AG04449 (cell line): ENCODE measurements at regions of chr5 and their contacts with region 1.

Region 1: DNA sequence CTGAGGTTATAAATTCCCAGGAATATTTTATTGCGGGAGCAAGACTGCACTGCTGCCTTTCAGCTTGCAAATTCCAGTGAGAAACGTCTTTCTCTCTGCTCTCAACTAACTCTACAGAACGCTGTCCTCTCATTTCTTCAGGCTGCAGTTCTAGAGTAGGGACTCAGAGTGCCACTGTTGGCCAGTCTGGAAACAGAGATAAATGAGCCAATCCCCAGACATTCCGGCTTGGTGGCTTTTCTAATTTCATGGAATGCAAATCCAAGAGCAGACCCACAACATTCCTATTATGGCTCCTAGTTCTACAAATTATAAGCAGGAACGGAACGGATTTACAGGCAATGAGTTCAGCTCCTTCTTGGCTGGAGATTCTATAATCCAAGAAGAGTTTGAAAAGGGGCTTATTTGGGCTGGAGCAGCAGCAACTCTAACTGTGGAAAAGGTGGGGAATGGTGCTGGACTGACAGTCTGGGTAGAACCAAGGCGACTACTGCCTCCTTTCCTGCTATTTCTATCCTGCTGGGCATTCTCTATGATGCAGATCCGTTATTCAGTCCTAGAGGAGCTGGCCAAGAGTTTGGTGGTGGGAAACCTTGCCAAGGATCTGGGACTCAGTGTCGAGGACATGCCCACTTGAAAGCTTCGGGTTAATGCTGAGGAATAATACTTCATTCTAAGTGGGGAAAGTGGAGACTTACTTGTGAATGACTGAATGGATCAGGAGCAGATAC is 9.3 kb downstream of the PCDHGA12 start:
- DNase-seq: no peak
- H3K4me3 ChIP-seq: no peak overlapping the region
- CTCF ChIP-seq: no peak

Region 2: DNA sequence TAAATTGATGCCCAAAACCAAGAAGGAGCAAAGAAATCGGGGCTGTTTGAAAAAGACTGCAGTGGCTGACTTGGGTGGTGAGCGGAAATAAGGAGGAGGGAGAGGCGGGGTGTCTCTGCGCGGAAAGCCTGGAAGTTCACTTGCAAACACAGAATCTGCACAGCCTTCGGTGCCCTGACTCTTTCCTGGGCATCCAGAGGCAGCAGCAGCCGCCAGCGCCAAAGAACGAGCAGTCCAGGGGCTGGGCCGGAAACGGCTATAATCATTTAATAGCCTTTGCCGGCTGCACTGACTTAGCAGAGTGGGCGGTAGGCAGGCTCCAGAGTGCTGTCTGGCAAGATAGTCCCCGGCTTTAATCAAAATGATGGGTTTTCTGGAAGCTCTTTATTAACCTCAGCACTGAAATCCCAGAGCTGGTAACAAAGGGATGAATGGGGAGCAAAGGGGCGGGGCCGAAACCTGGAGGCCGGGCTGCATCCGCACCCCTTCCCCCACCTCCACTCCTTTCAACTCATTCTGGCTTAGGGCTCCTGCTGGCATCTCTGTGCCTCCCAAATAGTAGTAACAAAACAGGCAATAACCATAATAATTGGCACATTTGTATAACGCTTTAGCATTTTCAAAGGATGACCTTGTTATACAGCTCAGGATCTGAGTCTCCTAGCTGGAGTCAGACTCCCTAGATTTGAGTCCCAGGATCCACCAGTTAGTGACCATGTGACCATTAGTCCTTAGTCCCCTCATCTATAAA is 437.5 kb before region 1 on chr5:
- CTCF ChIA-PET with region 1: no interaction called
- POLR2A ChIA-PET with region 1: no interaction called
- DNase-seq: no peak
- H3K4me3 ChIP-seq: no peak overlapping the region
- CTCF ChIP-seq: no peak

Region 3: DNA sequence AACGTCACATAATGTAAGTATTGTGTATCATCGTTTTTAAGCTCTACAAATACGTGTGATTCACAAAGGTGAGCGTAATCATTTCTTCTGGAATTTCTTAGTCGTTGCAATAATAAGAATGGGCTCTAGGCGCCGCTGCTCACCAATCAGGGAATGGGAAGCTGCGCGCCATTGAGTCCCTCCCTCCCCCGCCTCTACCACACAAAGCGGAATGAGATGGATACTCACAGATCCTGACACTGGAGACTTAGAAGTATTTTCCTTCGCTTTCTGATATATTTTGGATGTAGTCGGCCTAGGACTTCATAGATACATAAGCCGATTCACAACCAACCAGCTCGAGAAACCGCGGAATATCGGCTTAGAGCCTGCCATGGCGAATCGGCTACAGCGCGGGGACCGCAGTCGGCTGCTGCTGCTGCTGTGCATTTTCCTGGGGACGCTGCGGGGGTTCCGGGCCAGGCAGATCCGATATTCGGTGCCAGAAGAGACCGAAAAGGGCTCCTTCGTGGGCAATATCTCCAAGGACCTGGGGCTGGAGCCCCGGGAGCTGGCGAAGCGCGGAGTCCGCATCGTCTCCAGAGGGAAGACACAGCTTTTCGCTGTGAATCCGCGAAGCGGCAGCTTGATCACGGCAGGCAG is 18.6 kb before region 1 on chr5 and contains the start of gene PCDHGA11:
- CTCF ChIA-PET with region 1: interaction called, 196 read pairs
- POLR2A ChIA-PET with region 1: no interaction called
- DNase-seq: no peak
- H3K4me3 ChIP-seq: peak within 1 kb of the TSS; percentile 57
- CTCF ChIP-seq: peak; percentile 41

Region 4: DNA sequence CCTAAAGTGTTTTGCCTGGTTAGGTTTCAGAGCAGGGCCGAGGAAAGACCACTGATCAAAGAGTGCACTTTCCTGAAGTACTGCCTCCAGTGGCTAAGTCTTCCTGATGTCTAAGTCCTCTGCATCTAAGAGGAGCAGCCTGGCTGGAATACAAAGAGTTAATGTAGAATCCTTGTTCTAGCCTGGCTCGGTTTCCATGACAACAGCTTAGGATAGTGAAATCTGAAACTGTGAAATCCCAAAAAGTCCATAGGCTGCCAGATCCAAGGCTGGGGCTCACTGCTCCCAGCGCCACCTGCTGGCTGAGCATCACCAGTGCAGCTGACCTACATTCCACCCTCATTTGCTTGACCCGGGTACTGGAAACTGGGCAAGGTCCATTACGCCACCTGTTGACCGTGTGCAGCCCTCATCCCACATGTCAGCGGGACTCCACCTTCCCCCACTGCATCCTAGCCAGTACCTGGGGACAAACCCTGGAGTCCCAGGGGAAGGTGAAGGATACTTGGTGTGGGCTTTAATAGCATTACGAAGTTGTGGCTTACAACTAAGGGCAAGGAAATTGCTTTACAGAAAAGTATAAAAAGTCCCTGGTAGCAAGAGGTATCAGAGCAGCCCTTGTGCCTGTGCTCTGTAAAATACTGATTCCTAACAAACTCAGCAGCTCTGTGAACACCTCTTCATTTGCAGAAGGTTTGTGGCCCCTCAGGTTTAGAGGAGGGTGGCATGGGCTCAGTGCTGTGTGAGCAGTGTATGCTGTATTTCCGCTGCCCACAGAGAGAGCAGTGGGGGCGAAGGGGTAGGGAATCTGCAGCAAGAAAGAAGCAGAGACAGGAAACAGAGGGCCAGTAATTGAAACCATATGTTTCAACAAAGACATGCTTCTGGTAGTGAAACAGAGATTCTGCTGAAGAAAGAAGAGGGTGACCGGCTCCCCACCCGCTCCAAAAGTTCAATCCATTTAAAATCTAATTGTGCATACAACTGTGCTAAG is 85.3 kb after region 1 on chr5:
- CTCF ChIA-PET with region 1: interaction called, 31 read pairs
- POLR2A ChIA-PET with region 1: interaction called, 4 read pairs
- DNase-seq: peak; percentile 76
- H3K4me3 ChIP-seq: peak overlapping the region; percentile 29
- CTCF ChIP-seq: peak; percentile 97

Region 5: DNA sequence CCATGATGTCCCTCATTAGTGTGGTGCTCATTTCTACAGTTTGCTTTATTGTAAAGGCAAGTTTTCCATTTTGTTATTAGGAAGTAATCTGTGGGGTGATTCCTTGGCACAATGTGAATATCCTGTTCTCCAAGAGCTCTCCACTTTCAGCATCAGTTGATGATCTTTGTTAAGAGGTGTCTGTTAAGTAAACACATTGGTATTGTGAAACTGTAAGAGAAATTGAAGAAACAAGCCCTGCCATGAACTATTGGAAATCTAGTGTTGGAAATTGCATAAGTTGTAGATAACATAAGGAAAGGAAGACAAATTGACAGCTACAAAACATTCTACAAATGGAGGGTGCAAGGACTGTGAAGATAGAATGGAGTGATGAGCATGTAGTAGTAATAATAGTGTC is 546.5 kb after region 1 on chr5:
- CTCF ChIA-PET with region 1: no interaction called
- POLR2A ChIA-PET with region 1: no interaction called
- DNase-seq: no peak
- H3K4me3 ChIP-seq: no peak overlapping the region
- CTCF ChIP-seq: no peak